HEK293T (cell line): ENCODE measurements at regions of chr16 and their contacts with region 1.

Region 1: DNA sequence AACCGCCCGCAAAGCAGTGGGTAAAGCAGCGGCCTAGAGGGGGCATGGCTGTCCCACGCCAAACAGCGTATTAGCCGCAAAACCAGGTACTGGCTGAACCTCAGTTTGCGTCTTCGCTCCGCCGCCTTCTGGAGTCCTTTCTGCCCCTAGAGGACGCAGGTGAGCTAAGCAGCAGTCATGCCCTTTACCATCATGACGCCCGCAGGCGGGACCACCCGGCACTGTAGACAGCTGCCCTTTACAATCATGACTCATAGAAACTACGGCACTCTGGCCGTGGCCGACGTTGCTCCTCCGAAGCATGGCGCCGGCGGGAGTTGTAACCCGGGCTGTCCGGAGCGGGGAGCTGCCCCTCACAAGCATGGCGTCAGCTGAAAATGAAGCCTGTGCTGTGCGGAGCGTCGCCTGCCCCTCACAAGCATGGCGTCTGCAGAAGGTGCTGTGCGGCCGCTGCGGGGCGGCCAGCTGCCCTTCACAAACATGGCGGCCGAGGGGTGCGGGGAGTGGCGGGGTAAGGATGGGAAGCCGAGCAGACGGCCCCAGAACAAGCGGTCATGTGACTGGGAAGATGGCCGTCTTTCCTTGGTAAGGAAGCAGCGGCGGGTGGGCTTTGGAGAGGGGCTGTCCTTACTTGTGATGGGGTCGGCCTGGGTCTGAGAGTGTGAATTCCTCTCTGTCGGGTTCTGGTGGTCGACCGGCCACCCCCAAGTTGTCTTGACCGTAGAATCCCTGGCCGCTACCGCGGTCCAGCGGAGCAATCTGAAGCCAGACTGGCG is at the start of gene VPS35L:
- DNase-seq: peak; percentile 93

Region 2: GRCh38 chr16:19474617-19475016 is 80.7 kb before region 1 on chr16:
- CTCF ChIA-PET with region 1: no interaction called
- POLR2A ChIA-PET with region 1: no interaction called
- DNase-seq: no peak

Region 3: DNA sequence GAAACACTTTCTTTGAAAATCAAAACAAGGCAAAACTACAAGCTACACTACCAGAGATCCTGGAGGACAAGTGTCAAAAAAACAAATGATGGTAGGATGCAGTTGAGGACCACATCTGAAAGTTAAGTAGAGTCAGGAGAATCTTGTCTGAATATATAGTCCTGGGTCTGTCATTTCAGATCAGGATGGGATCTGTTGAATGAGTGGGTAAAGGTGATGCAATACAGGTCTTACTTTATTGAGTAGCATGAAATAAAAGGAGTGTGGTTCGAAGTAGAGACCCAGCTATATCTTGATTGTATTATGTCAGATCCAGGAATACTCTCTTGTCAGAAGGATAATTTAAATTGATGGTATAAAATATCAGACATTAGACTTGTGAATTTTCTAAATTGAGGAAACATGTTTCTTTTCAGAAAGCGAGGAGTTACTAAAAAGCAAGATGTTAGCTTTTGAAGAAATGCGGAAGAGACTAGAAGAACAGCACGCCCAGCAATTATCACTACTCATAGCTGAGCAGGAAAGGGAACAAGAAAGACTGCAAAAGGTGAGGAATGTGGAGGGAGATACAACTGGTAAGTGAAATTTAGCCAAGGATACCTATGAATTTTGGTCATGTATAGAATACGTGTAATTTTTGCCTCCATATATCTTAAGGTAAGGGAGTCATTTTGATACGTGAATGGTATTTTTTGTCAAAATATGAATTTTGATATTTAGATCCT is 14.9 kb before region 1 on chr16:
- CTCF ChIA-PET with region 1: interaction called, 4 read pairs
- POLR2A ChIA-PET with region 1: interaction called, 16 read pairs
- DNase-seq: no peak